Sciatic nerve (tissue), 2 donors: ENCODE measurements at regions of chr5 and their contacts with region 1.

Region 1: GRCh38 chr5:125269926-125270325 is 523.5 kb upstream of the ZNF608 start:
- DNase-seq: no peak
- ATAC-seq: no peak

Region 2: DNA sequence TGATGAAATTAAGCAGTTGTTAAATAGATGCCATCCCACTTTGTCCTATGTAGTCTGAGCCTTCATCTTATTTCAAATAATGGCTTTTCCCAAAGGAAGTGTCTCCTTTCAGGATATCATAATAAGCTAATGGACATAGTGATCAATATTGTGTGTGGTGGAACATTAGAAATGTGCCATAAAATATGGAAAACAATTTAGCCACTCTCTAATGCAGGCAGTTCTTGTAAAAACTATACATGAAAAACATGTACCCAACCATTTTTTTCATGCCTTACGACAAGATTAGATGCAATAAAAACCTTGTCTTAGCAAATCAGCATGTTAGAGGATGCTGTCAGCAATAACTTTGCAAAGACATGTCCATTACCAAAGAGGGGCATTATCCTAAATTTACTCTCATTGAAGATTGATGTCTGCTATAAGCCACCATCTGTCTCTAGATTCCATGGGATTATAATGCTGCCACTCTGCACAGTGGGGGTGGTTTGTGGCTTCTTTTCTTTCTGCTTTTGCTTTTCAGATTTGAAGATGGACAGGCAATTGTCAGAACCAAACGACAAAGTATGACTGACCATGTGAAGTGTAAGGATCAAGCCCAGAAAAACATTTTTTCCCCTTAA is 200.5 kb after region 1 on chr5:
- intact Hi-C with region 1: no loop called
- DNase-seq: no peak
- ATAC-seq: no peak

Region 3: GRCh38 chr5:126826619-126827215 is 1556.8 kb after region 1 on chr5:
- intact Hi-C with region 1: loop called (anchors 5 kb)
- DNase-seq: no peak
- ATAC-seq: no peak